Activated T-helper 1 cell treated with anti-CD3 and anti-CD28 coated beads, Interleukin-12 subunit alpha, Interleukin-12 subunit beta, Interleukin-2, Interleukin-4 antibody, amounts not matched to agents 30 ng/mL and 10 ng/mL and 1 ng/mL, durations not matched to agents 14 hours and 24 hours and 36 hours (primary cell): ENCODE measurements at regions of chr2 and their contacts with region 1.

Region 1: GRCh38 chr2:53964257-53964952 is 6.4 kb downstream of the PSME4 start:
- DNase-seq: no peak
- H3K4me3 Mint-ChIP-seq: no peak overlapping the region
- H3K27ac Mint-ChIP-seq: no peak overlapping the region
- H3K4me1 Mint-ChIP-seq: peaks cover 42% of the 10 kb centered on the region
- H3K27me3 Mint-ChIP-seq: no peaks in the 10 kb centered on the region

Region 2: DNA sequence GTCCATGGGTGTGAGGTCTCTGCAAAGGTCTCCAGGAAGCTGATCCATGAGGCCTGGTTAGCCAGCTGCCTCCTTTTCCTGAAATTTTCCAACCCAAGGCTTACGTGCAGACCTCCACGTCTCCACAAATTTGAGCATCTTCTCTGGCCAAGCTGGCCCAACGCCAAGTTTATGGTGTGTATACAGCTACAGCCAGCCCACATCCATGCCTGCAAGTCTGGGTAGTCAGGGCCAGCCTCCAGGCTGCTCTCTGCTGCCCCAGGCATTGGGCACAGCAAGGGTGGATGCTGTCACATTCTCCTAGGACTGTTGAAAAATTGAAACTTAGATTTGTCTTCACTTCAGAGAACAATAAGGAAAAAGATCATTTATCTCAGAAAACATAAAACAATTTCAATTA is 722.3 kb before region 1 on chr2:
- intact Hi-C with region 1: no loop called
- DNase-seq: no peak
- H3K4me3 Mint-ChIP-seq: no peak overlapping the region
- H3K27ac Mint-ChIP-seq: no peak overlapping the region
- H3K4me1 Mint-ChIP-seq: no peaks in the 10 kb centered on the region
- H3K27me3 Mint-ChIP-seq: no peaks in the 10 kb centered on the region

Region 3: DNA sequence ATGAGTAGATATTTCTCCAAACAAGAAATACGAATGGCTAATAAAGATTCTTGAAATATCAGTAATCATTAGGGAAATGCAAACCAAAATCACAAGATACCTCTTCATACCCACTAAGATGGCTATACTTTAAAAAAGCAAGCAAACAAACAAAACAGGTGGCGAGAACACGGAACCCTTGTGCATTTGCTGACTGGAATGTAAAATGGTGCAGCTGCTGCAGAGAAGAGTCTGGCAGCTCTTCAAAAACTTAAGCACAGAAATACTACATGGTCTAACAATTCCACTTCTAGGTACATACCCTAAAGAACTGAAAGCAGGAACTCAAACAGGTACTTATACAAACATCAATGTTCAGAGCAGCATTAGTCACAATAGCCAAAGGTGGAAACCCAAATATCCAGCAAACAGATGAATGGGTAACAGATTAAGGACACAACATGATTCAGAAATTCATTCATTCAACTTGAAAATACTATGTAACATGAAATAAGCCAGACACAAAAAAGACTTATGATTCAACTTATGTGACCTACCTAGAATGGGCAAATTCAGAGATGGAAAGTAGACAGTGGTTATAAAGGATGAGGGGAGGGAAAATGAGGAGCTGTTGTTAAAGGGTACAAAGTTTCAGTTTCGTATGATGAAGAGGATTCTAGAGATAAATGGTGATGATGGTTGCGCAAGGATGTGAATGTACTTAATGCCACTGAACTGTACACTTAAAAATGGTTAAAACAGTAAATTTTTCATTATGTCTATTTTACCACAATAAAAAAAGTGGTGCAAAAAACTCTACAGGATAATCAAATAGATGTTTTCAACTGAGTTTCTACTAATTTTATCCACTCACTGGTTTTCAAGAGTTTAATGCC is 77.8 kb before region 1 on chr2:
- intact Hi-C with region 1: loop called (anchors 2 kb)
- DNase-seq: no peak
- H3K4me3 Mint-ChIP-seq: no peak overlapping the region
- H3K27ac Mint-ChIP-seq: peak overlapping the region; percentile 0
- H3K4me1 Mint-ChIP-seq: peaks cover 23% of the 10 kb centered on the region
- H3K27me3 Mint-ChIP-seq: no peaks in the 10 kb centered on the region

Region 4: GRCh38 chr2:53941749-53942148 is 22.7 kb before region 1 on chr2:
- intact Hi-C with region 1: loop called (anchors 2 kb)
- DNase-seq: no peak
- H3K4me3 Mint-ChIP-seq: no peak overlapping the region
- H3K27ac Mint-ChIP-seq: no peak overlapping the region
- H3K4me1 Mint-ChIP-seq: peaks cover 6% of the 10 kb centered on the region
- H3K27me3 Mint-ChIP-seq: no peaks in the 10 kb centered on the region

Region 5: GRCh38 chr2:54073797-54074196 is 109.4 kb after region 1 on chr2:
- intact Hi-C with region 1: loop called (anchors 5 kb)
- DNase-seq: no peak
- H3K4me3 Mint-ChIP-seq: no peak overlapping the region
- H3K27ac Mint-ChIP-seq: peak overlapping the region; percentile 55
- H3K4me1 Mint-ChIP-seq: peaks cover 14% of the 10 kb centered on the region
- H3K27me3 Mint-ChIP-seq: no peaks in the 10 kb centered on the region